ENCODE measurements at regions of chr5 and their contacts with region 1.

Region 1: DNA sequence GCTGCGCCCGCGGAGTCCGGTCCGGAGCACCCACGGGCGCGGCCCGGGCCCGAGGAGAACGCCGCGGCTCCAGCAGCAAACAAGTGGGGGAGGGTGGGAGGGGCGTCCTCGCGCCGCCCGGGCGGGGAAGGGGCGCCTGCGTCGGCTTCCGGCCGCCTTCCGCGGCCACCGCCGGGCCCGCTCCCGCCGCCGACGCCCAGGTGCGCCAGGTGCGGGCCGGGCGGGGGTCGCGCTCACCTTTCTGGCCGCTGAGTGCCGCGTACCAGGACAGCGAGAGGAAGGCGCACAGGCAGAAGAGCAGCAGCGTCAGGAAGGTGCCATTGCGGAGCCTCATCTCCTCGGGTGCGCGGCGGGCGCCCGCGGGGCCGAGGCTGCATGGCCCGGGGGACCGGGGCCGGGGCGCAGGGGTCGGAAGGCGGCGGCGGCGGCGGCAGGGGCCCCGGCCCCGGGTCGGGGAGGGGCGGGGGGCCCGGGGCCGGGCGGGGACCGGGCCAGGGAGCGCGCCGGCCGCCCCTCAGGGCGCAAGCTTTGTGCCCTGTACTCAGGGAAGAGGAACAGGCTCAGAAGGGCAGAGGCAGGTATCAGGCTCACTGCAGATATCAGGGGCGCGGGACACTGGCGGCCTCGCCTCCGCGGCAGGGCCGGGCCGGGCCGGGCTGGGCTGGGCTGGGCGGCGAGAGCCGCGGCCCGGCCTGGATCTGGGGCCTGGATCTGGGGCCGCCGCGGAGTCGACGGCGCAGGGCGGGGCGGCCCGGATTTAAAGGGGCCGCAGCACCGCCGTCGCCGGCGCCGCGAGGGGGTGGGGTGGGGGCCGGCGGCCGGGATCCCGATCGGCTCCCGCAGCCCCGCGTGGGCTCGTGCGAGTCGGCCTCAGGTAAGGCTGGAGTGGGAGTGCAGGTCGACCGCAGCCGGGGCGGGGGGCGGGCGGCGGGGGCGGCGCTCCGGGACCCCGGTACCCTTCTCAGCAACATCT is at the start of gene MGAT4B:
- DNase-seq: peak; percentile 70 to 78
- ATAC-seq: peak; percentile 77 to 91 (median 81)
- H3K4me3 ChIP-seq: peak within 1 kb of the TSS; percentile 58
- H3K4me3 Mint-ChIP-seq: peak within 1 kb of the TSS; percentile 83
- H3K27ac ChIP-seq: peak within 1 kb of the TSS; percentile 76
- H3K27ac Mint-ChIP-seq: peak within 1 kb of the TSS in 1 of 2 donors; percentile 82
- H3K4me1 ChIP-seq: peaks cover 40% of the 10 kb centered on the region
- H3K4me1 Mint-ChIP-seq: peaks cover 13 to 28% of the 10 kb centered on the region in 2 donors
- H3K27me3 ChIP-seq: no peaks in the 10 kb centered on the region
- H3K27me3 Mint-ChIP-seq: no peaks in the 10 kb centered on the region
- CTCF ChIP-seq: no peak
- total RNA-seq, gene MGAT4B: 143 to 159 (median 144) TPM

Region 2: DNA sequence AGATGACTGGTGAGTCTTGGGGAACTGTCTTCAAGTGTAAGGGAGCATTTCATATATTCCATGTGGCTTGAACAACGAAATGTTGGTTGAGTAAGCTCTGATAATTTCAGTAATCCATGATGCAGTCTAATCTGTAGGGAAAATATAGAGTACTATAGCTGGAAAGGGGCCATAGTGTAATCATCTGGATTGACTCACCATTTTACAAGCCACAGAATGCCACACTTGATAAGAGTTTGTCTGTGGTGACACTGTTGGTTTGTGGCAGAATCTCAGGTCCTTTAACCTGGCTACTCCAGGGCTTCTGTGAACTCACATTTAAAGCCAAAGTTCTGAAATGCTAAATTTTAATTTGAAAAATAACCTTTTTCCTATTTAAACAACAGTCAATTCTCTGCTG is 90.2 kb before region 1 on chr5:
- intact Hi-C with region 1: no loop called
- DNase-seq: no peak
- ATAC-seq: no peak
- H3K4me3 ChIP-seq: no peak overlapping the region
- H3K4me3 Mint-ChIP-seq: no peak overlapping the region
- H3K27ac ChIP-seq: no peak overlapping the region
- H3K27ac Mint-ChIP-seq: peak overlapping the region; percentile 2 to 36
- H3K4me1 ChIP-seq: no peaks in the 10 kb centered on the region
- H3K4me1 Mint-ChIP-seq: peaks cover 0 to 11% of the 10 kb centered on the region in 2 donors
- H3K27me3 ChIP-seq: no peaks in the 10 kb centered on the region
- H3K27me3 Mint-ChIP-seq: no peaks in the 10 kb centered on the region
- CTCF ChIP-seq: no peak

Region 3: DNA sequence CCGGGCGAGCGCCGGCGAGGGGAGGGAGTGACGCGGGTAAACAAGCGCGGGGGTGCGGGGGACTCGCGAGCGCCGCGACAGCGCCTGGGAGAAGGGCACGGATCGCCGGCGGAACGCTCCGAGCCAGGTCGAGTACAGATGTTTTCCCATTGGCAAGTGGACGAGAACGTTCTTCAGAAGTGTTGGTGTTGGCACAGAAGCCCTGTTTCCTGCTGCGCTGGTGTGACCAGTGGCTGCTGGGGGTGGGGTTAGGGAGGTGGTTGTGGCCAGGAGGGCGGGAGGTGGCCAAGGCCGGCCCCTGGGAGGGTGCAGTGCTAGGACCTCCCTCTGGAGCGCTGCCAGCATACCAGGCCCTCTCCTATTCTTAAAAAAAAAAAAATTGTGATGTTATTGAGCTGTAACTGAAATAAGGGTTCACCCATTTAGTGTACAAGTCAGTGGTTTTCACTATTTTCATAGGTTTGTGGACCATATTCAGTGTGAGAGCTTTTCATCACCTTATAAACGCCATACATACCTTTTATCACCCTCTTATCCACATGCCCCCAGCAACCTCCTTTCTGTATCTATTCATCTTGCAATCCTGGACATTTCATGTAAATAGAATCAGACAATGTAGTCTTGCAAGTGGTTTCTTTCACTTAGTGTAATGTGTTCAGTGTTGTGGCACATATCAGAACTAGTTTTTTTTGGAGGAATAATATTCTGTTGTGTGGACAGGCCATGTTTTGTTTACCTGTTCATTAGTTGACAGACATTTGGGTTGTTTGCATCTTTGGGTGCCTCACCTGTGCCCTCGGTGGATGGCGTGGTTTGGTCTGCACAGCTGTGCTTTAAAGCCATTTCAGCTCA is 15.3 kb after region 1 on chr5:
- intact Hi-C with region 1: loop called (anchors 1 kb)
- DNase-seq: peak; percentile 91 to 94
- ATAC-seq: peak; percentile 55 to 82 (median 66)
- H3K4me3 ChIP-seq: peak overlapping the region; percentile 96
- H3K4me3 Mint-ChIP-seq: peak overlapping the region; percentile 96
- H3K27ac ChIP-seq: peak overlapping the region; percentile 100
- H3K27ac Mint-ChIP-seq: peak overlapping the region; percentile 97 to 98
- H3K4me1 ChIP-seq: peaks cover 58% of the 10 kb centered on the region
- H3K4me1 Mint-ChIP-seq: peaks cover 41 to 65% of the 10 kb centered on the region in 2 donors
- H3K27me3 ChIP-seq: no peaks in the 10 kb centered on the region
- H3K27me3 Mint-ChIP-seq: no peaks in the 10 kb centered on the region
- CTCF ChIP-seq: no peak

Region 4: GRCh38 chr5:179858586-179859427 is 52.3 kb after region 1 on chr5 and contains the start of gene MRNIP:
- intact Hi-C with region 1: loop called (anchors 2 kb)
- DNase-seq: peak; percentile 82 to 94
- ATAC-seq: peak; percentile 96 to 98 (median 97)
- H3K4me3 ChIP-seq: peak within 1 kb of the TSS; percentile 98
- H3K4me3 Mint-ChIP-seq: peak within 1 kb of the TSS; percentile 95
- H3K27ac ChIP-seq: peak within 1 kb of the TSS; percentile 52
- H3K27ac Mint-ChIP-seq: peak within 1 kb of the TSS; percentile 78 to 91
- H3K4me1 ChIP-seq: peaks cover 13% of the 10 kb centered on the region
- H3K4me1 Mint-ChIP-seq: peaks cover 8 to 15% of the 10 kb centered on the region in 2 donors
- H3K27me3 ChIP-seq: no peaks in the 10 kb centered on the region
- H3K27me3 Mint-ChIP-seq: no peaks in the 10 kb centered on the region
- CTCF ChIP-seq: no peak
- total RNA-seq, gene MRNIP: 19.7 to 40.2 (median 25.4) TPM

Region 5: DNA sequence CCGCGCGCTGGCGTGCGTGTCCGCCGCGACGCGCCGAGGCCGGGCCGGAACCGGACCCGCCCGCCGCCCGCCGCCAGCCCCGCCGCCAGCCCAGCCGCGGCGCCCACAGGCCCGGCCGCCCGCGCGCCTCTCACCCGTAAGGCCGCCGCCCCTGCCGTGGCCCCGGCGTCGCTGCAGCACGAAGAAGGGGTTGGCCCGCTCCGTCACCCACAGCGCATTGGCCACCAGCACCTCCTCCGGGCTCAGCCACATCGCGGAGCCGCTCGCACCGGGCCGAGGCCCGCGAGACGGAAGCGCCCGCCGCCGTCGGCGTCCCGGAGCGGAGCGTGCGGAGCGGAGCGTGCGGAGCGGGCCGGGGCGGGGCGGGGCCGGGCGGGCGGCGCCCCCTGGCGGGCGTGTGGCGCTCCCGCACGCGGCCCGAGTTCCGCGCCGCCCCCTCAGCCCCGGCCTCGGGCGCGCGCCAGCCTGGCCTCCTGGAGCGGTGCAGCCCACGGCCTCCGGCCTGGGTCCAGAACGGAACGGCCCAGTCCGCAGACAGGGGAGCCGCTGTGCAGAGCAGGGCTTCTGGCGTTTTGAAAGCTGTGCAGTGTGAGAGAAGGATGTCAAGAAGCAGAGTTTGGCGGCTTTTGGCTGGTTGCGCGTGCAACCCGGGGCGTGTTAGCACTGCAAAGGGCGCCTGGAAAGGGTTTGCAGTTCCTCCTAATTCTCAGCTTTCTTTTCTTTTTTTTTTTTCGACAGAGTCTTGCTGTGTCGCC is 101.2 kb after region 1 on chr5 and contains the start of gene TBC1D9B:
- intact Hi-C with region 1: loop called (anchors 2 kb)
- DNase-seq: peak; percentile 68 to 91
- ATAC-seq: peak; percentile 90 to 96 (median 92)
- H3K4me3 ChIP-seq: peak within 1 kb of the TSS; percentile 55
- H3K4me3 Mint-ChIP-seq: peak within 1 kb of the TSS; percentile 88
- H3K27ac ChIP-seq: no peak within 1 kb of the TSS
- H3K27ac Mint-ChIP-seq: peak within 1 kb of the TSS; percentile 68 to 78
- H3K4me1 ChIP-seq: peaks cover 23% of the 10 kb centered on the region
- H3K4me1 Mint-ChIP-seq: peaks cover 10 to 27% of the 10 kb centered on the region in 2 donors
- H3K27me3 ChIP-seq: no peaks in the 10 kb centered on the region
- H3K27me3 Mint-ChIP-seq: no peaks in the 10 kb centered on the region
- CTCF ChIP-seq: peak; percentile 11
- total RNA-seq, gene TBC1D9B: 102 to 115 (median 113) TPM

Region 6: DNA sequence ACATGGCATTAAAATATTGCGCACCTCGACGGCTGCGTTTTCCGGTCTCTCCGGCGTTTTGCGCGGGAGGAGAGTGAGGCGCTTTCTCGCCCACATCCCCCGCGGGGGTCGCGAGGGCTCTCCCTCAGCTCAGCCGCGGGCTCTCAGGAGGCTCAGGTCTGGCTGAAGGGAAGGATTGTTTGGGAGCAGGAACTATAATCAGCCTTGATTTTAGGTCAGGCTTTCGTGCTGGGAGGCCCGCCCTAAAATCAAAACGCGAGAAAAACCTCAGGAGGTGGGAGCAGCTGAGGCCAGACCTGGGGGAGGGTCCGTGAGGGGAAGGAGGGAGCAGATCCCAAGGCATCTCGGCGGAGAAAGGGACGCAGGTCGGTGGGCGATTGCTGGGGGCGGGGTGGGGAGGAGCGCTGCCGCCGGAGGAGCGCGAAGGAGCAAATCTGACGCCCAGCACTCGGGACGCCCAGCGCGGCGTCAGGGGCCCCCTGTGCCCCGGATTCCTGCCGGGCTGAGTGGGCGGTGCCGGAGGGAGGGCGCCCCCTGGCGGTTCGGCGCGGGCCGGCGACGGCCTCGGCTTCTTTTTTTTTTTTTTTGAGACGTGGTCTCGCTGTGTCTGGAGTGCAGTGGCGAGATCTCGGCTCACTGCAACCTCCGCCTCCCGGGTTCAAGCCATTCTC is 283.7 kb after region 1 on chr5:
- intact Hi-C with region 1: loop called (anchors 2 kb)
- DNase-seq: peak; percentile 86 to 91
- ATAC-seq: peak; percentile 88 to 94 (median 90)
- H3K4me3 ChIP-seq: peak overlapping the region; percentile 39
- H3K4me3 Mint-ChIP-seq: peak overlapping the region; percentile 80
- H3K27ac ChIP-seq: no peak overlapping the region
- H3K27ac Mint-ChIP-seq: peak overlapping the region in 1 of 2 donors; percentile 76
- H3K4me1 ChIP-seq: peaks cover 38% of the 10 kb centered on the region
- H3K4me1 Mint-ChIP-seq: peaks cover 28 to 37% of the 10 kb centered on the region in 2 donors
- H3K27me3 ChIP-seq: peaks cover 2% of the 10 kb centered on the region
- H3K27me3 Mint-ChIP-seq: peaks cover 21 to 27% of the 10 kb centered on the region in 2 donors
- CTCF ChIP-seq: peak; percentile 90